ENCODE measurements at regions of chr1 and their contacts with region 1.

Region 1: GRCh38 chr1:228139944-228140656 is at the start of gene GUK1:
- DNase-seq: peak; percentile 100
- H3K4me3 Mint-ChIP-seq: peak within 1 kb of the TSS; percentile 99
- H3K27ac Mint-ChIP-seq: peak within 1 kb of the TSS; percentile 95
- H3K4me1 Mint-ChIP-seq: peaks cover 25% of the 10 kb centered on the region
- H3K27me3 Mint-ChIP-seq: peaks cover 29% of the 10 kb centered on the region
- CTCF ChIP-seq: peak; percentile 32
- total RNA-seq, gene GUK1: 495 and 510 TPM in 2 replicates

Region 2: DNA sequence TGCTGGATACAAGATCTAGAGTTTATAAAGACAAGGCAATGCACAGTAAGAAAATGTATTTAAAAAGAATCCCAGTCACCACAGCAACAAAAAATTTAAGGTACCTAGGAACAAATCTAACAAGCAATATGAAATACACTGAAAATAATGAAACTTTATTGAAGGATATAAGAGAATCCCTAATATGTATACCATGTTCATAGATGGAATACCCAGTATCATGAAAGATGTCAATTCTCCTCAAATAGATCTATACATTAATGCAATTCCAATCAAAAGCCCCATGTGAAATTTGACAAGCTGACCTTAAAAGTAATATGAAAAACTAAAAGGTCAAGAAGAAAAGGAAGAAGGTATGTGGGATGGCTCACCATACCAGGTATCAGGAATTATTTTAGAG is 1090.8 kb before region 1 on chr1:
- CTCF ChIA-PET with region 1: no interaction called
- POLR2A ChIA-PET with region 1: no interaction called
- intact Hi-C with region 1: no loop called
- DNase-seq: no peak
- H3K4me3 Mint-ChIP-seq: no peak overlapping the region
- H3K27ac Mint-ChIP-seq: no peak overlapping the region
- H3K4me1 Mint-ChIP-seq: peaks cover 1% of the 10 kb centered on the region
- H3K27me3 Mint-ChIP-seq: no peaks in the 10 kb centered on the region
- CTCF ChIP-seq: no peak

Region 3: DNA sequence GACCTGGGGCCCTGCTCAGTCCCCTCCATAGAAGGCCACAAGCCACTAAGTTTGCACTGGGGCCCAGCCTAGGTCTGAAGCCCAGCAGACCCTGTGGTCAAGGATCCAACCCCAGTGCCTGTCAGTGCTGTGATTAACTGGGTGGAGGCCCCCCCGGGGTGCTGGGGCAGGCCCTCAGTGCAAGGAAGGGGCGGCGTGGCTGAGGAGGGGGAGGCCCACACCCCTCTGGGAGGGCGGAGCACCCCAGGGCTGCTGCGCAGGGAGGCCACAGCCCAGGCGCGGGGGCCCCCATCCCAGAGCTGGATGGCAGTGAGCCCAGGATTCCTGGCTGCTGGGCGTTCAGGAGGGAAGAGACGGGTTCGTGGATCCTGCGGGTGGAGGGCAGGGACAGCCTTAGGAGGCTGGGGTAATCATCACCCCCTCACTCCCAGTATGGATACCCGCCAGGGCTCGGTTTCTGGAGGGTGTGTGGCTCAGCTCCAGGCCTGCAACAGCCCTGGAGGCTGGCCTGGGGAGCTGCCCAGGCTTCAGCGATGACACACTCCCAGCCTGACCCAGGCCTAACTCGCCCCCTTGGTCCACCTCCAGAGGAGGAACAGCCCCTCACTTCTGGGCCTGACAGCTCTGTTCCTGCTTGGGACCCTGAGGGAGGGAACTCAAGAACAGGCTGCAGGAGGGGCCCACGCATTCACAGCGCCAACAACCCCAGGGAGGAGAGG is 10.5 kb after region 1 on chr1:
- CTCF ChIA-PET with region 1: interaction called, 5 read pairs
- POLR2A ChIA-PET with region 1: interaction called, 76 read pairs
- intact Hi-C with region 1: no loop called
- DNase-seq: peak; percentile 67
- H3K4me3 Mint-ChIP-seq: peak overlapping the region; percentile 44
- H3K27ac Mint-ChIP-seq: peak overlapping the region; percentile 83
- H3K4me1 Mint-ChIP-seq: peaks cover 47% of the 10 kb centered on the region
- H3K27me3 Mint-ChIP-seq: no peaks in the 10 kb centered on the region
- CTCF ChIP-seq: no peak

Region 4: GRCh38 chr1:228486596-228487335 is 346.7 kb after region 1 on chr1:
- CTCF ChIA-PET with region 1: interaction called, 3 read pairs
- POLR2A ChIA-PET with region 1: interaction called, 10 read pairs
- intact Hi-C with region 1: no loop called
- DNase-seq: peak; percentile 93
- H3K4me3 Mint-ChIP-seq: peak overlapping the region; percentile 90
- H3K27ac Mint-ChIP-seq: peak overlapping the region; percentile 100
- H3K4me1 Mint-ChIP-seq: peaks cover 40% of the 10 kb centered on the region
- H3K27me3 Mint-ChIP-seq: peaks cover 14% of the 10 kb centered on the region
- CTCF ChIP-seq: no peak